ENCODE measurements at regions of chr3 and their contacts with region 1.

Region 1: DNA sequence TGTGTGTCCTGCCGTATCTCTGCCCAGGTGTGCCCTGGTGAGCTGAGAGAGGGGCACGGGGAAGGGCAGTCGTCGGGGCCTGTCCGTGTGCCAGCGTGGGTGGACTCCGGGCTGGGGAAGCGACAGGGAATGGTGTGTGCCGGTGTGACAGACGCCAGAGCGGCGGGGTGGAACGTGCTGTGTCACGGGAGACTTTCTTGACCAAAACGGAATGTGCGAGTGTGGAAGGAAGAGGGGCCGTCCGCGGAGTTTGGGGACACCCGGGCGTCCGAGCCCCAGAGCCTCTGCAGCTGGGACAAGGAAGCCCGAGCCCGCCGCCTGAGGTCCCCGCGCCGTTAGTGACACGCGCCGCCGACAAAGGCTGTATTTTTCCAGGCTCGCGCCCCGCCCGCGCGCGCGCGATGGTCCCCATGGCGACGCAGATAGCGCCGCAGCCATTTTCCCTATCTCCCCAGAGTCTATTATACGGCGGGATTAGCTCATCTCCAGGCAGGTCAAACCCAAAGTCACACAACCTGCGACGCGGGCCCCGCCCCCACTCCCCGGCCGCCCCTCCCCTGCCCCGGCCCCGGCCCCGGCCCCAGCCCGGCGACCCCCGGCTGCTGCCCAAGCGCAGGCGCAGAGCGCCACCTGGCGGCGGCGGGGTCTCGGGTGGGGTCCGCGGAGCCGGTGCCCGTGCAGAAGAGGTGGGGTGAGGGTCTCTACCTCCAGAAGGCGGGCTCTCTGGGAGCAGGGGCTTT is 4.6 kb upstream of the GATA2 start:
- DNase-seq: peak; percentile 76 to 78
- ATAC-seq: peak; percentile 66 to 88 (median 82)
- H3K4me3 ChIP-seq: peak overlapping the region; percentile 32 to 65 (median 55)
- H3K27ac ChIP-seq: peak overlapping the region in 2 of 10 donors; percentile 6 to 55
- H3K4me1 ChIP-seq: peaks cover 2 to 31% (median 27%) of the 10 kb centered on the region in 9 donors
- H3K27me3 ChIP-seq: peaks cover 3 to 89% (median 47%) of the 10 kb centered on the region in 7 donors
- CTCF ChIP-seq: peak; percentile 57 to 90 (median 81)

Region 2: GRCh38 chr3:127949446-127950055 is 548.0 kb before region 1 on chr3:
- intact Hi-C with region 1: no loop called
- DNase-seq: no peak
- ATAC-seq: no peak
- H3K4me3 ChIP-seq: no peak overlapping the region
- H3K27ac ChIP-seq: peak overlapping the region in 6 of 10 donors; percentile 37 to 94 (median 87)
- H3K4me1 ChIP-seq: peaks cover 0 to 48% (median 17%) of the 10 kb centered on the region in 9 donors
- H3K27me3 ChIP-seq: no peaks in the 10 kb centered on the region
- CTCF ChIP-seq: no peak

Region 3: GRCh38 chr3:128075516-128076482 is 421.8 kb before region 1 on chr3:
- intact Hi-C with region 1: loop called in 1 of 10 experiments (anchors 10 kb)
- DNase-seq: peak; percentile 85 to 92
- ATAC-seq: peak; percentile 84 to 95 (median 92)
- H3K4me3 ChIP-seq: peak overlapping the region; percentile 38 to 63 (median 56)
- H3K27ac ChIP-seq: peak overlapping the region in 9 of 10 donors; percentile 33 to 65 (median 55)
- H3K4me1 ChIP-seq: peaks cover 6 to 68% (median 46%) of the 10 kb centered on the region in 9 donors
- H3K27me3 ChIP-seq: no peaks in the 10 kb centered on the region
- CTCF ChIP-seq: peak; percentile 94 to 99 (median 97)

Region 4: GRCh38 chr3:128170805-128171516 is 326.6 kb before region 1 on chr3:
- intact Hi-C with region 1: loop called in 9 of 10 experiments (anchors 5 to 10 kb)
- DNase-seq: peak; percentile 23 to 70
- ATAC-seq: peak in 7 of 8 donors; percentile 66 to 76 (median 72)
- H3K4me3 ChIP-seq: no peak overlapping the region
- H3K27ac ChIP-seq: no peak overlapping the region
- H3K4me1 ChIP-seq: peaks cover 11 to 80% (median 54%) of the 10 kb centered on the region in 9 donors
- H3K27me3 ChIP-seq: no peaks in the 10 kb centered on the region
- CTCF ChIP-seq: peak; percentile 30 to 87 (median 71)

Region 5: DNA sequence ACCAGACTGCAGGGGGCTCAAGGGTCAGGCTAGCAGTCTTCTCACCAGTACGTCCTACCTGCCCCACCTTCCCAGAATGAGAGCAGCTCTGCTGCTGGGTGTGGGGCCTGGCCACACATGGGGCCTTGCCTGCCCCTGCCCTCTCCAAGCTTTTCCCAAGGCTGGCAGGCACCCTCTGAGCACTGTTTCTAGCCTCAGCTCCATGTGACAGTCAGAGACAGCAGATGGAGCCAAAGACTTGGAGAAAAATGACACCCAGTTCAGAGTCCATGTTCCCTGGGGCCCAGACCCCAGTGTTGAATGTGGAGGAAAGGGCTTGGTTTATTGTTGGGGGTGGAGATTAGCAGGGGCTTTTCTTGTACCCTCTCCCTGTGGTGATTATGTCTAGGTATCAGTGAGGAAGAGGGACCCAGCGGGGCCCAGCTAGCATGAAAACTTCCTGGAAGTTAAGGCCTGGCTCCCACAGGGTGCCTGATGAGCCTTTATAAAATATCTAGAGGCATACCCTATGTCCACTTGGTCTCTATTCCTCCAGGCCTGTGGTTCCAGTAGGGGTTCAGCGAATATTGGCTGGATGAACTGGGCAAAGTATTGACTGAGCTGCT is 190.4 kb before region 1 on chr3:
- intact Hi-C with region 1: loop called in 3 of 10 experiments (anchors 5 to 10 kb)
- DNase-seq: no peak
- ATAC-seq: peak in 2 of 8 donors; percentile 4 to 34
- H3K4me3 ChIP-seq: no peak overlapping the region
- H3K27ac ChIP-seq: no peak overlapping the region
- H3K4me1 ChIP-seq: peaks cover 0 to 42% (median 20%) of the 10 kb centered on the region in 9 donors
- H3K27me3 ChIP-seq: no peaks in the 10 kb centered on the region
- CTCF ChIP-seq: peak in 3 of 9 donors; percentile 18 to 27 (median 24)

Region 6: DNA sequence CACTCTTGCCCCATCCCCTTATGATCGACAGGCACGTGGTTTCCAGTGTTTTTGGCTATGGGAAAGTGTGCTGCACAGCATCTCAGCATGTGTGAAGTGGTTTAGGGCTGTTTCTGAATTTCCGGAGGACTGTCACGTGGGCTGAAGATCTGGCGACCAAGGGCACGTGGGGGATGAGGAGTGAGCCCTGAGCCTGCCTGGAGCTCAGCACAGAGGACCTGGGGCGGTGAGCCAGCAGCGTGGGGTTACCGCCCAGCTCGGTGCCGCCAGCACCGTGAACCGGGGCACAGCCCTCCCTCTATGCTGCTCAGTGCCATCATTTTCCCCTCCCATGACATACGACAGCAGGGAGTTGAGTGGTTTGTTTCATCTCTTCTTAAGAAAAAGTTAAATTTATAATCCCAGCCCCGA is 181.1 kb before region 1 on chr3:
- intact Hi-C with region 1: loop called in 1 of 10 experiments (anchors 10 kb)
- DNase-seq: no peak
- ATAC-seq: peak in 2 of 8 donors; percentile 3 to 33
- H3K4me3 ChIP-seq: no peak overlapping the region
- H3K27ac ChIP-seq: no peak overlapping the region
- H3K4me1 ChIP-seq: peaks cover 0 to 27% (median 5%) of the 10 kb centered on the region in 9 donors
- H3K27me3 ChIP-seq: no peaks in the 10 kb centered on the region
- CTCF ChIP-seq: no peak

Region 7: GRCh38 chr3:128369864-128370642 is 127.5 kb before region 1 on chr3:
- intact Hi-C with region 1: no loop called
- DNase-seq: no peak
- ATAC-seq: peak in 5 of 8 donors; percentile 15 to 44 (median 15)
- H3K4me3 ChIP-seq: no peak overlapping the region
- H3K27ac ChIP-seq: peak overlapping the region; percentile 53 to 86 (median 74)
- H3K4me1 ChIP-seq: peaks cover 16 to 57% (median 53%) of the 10 kb centered on the region in 9 donors
- H3K27me3 ChIP-seq: no peaks in the 10 kb centered on the region
- CTCF ChIP-seq: no peak

Region 8: GRCh38 chr3:128584412-128585020 is 87.0 kb after region 1 on chr3:
- intact Hi-C with region 1: loop called in 2 of 10 experiments (anchors 5 kb)
- DNase-seq: peak; percentile 74 to 75
- ATAC-seq: peak; percentile 94 to 100 (median 98)
- H3K4me3 ChIP-seq: no peak overlapping the region
- H3K27ac ChIP-seq: no peak overlapping the region
- H3K4me1 ChIP-seq: peaks cover 0 to 11% (median 3%) of the 10 kb centered on the region in 9 donors
- H3K27me3 ChIP-seq: peaks cover 0 to 4% (median 0%) of the 10 kb centered on the region in 7 donors
- CTCF ChIP-seq: peak; percentile 44 to 84 (median 74)

Measured in heart right ventricle (tissue), 16 donors.